SK-N-SH (cell line): ENCODE measurements at regions of chr6 and their contacts with region 1.

Region 1: GRCh38 chr6:50655848-50656453 is 57.4 kb upstream of the TFAP2D start:
- DNase-seq: peak; percentile 10
- H3K4me3 ChIP-seq: no peak overlapping the region
- H3K27ac ChIP-seq: no peak overlapping the region
- H3K4me1 ChIP-seq: peaks cover 0 to 3% of the 10 kb centered on the region in 2 experiments; a peak in 1 of 4 replicates
- H3K27me3 ChIP-seq: no peaks in the 10 kb centered on the region
- CTCF ChIP-seq: peak; percentile 70
- EP300 ChIP-seq: no peak
- RAD21 ChIP-seq: peak; percentile 64

Region 2: GRCh38 chr6:50666089-50666488 is 10.1 kb after region 1 on chr6:
- CTCF ChIA-PET with region 1: interaction called, 13 read pairs
- POLR2A ChIA-PET with region 1: no interaction called
- DNase-seq: no peak
- H3K4me3 ChIP-seq: no peak overlapping the region
- H3K27ac ChIP-seq: no peak overlapping the region
- H3K4me1 ChIP-seq: no peaks in the 10 kb centered on the region
- H3K27me3 ChIP-seq: no peaks in the 10 kb centered on the region
- CTCF ChIP-seq: no peak
- EP300 ChIP-seq: no peak
- RAD21 ChIP-seq: no peak

Region 3: DNA sequence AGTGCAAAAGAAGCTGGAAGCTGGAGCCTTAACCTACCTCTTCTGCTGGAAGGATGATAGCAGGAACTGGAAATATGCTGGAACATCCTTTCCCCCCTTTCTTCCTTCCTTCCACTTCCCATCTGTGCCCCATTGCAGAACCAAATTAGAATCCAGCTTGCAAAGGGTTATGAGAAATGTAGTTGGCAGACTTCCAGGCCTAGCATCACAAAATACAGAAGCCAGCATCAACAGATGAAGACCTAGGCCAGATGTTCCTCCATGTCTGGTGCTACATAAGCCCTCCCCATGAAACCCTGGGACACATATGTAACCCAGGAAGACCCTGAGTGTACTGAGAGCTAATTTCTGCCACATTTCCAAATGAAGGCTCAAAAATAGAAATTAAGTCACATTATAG is 122.7 kb after region 1 on chr6:
- CTCF ChIA-PET with region 1: interaction called, 10 read pairs
- POLR2A ChIA-PET with region 1: no interaction called
- DNase-seq: peak; percentile 26
- H3K4me3 ChIP-seq: no peak overlapping the region
- H3K27ac ChIP-seq: no peak overlapping the region
- H3K4me1 ChIP-seq: no peaks in the 10 kb centered on the region
- H3K27me3 ChIP-seq: no peaks in the 10 kb centered on the region
- CTCF ChIP-seq: no peak
- EP300 ChIP-seq: no peak
- RAD21 ChIP-seq: no peak